Activated T-helper 2 cell treated with anti-CD3 and anti-CD28 coated beads, Interferon-gamma antibody, Interleukin-2, Interleukin-4, amounts not matched to agents 10 μg/mL and 5 μg/mL and 100 μg/mL, durations not matched to agents 14 hours and 24 hours and 36 hours (primary cell): ENCODE measurements at regions of chr16 and their contacts with region 1.

Region 1: DNA sequence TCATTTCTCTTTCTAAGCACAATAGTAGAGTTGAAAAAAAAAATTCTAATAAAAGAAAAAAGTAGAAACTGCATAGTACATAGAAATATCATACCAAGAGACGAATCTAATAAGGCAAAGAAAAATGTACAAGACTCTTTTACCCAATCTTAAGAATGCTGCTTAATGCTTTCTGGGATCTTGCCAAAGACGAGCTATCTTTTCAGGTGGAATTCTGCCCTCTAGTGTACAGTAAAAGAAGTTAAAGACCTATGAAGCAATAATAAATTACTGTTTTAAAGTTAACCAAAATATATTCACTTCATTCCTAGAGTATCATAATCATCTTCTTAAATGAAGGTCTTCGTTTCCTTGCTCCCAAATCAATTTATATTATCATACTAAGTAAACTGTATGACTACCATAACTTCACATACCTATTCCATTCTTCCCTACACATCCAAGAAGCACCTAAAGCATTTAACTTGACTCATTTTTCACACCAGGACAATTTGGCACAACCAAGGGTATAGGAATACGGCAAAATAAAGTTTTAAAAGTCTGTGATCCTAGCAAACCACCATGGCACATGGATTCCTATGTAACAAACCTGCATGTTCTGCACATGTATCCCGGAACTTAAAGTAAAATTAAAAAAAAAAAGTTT is 47.7 kb downstream of the CFDP1 start:
- DNase-seq: no peak
- H3K4me3 Mint-ChIP-seq: no peak overlapping the region
- H3K27ac Mint-ChIP-seq: no peak overlapping the region
- H3K4me1 Mint-ChIP-seq: peaks cover 6% of the 10 kb centered on the region
- H3K27me3 Mint-ChIP-seq: peaks cover 22% of the 10 kb centered on the region

Region 2: DNA sequence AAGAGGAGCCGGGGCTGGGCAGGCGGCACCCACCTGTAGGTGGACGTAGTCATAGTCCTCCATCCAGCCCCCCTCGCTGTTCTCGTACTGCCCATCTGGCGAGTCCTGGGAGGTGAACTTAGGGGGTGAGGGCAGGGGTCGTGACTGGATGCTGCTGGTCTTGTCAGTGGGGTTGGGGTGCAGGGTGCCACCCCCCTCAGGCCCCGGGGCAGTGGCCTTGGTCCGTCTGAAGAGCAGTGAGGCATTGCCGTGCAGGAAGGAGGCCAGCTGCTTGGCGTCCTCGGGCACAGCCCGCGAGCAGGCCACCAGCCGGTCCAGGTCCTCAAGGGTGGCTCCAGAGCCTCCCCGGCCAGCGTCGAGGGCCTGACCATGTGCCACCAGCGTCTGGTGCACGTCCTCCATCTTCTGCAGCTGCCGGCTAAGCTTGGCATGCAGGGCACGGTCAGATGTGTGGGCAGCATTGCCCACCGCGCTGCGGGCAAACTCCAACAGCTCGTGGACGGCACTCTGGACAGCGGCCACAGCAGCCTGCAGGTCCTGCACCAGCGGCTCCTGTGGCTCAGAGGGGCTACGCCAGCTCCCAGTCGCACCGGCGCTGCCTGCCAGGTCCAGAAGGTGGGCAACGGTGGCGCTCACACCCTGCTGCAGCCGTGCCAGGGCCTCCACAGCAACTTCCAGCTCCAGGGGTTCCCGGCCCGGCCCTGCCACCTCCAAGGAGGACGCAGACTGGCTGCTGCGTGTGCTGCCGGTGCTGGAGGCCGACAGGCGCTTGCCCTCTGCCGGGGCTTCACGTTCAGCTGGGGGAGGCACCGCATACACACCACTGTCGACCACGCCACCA is 150.6 kb before region 1 on chr16:
- intact Hi-C with region 1: loop called (anchors 1 kb)
- DNase-seq: no peak
- H3K4me3 Mint-ChIP-seq: no peak overlapping the region
- H3K27ac Mint-ChIP-seq: no peak overlapping the region
- H3K4me1 Mint-ChIP-seq: no peaks in the 10 kb centered on the region
- H3K27me3 Mint-ChIP-seq: peaks cover 2% of the 10 kb centered on the region